Right cardiac atrium (tissue), 5 donors: ENCODE measurements at regions of chr11 and their contacts with region 1.

Region 1: DNA sequence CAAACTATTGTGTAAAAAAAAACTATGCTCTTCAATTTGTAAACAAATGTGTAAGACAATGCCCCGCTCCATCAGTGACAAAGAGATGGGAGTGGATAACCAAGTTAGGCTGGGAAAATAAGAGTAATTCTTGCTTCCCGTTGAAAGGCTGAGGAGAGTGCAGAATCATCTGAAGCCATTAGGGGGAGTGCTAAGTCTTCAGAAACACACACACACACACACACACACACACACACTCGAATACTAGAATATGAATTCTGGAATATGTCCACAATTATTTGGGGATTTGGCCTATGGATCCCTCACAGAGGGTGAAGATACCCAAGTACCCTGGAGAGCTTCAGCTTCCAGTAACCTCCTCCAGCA is 27.8 kb upstream of the ROBO3 start:
- DNase-seq: no peak
- ATAC-seq: peak; percentile 67 to 74
- H3K4me3 ChIP-seq: no peak overlapping the region
- H3K27ac ChIP-seq: no peak overlapping the region
- H3K4me1 ChIP-seq: peaks cover 7% of the 10 kb centered on the region
- H3K27me3 ChIP-seq: no peaks in the 10 kb centered on the region

Region 2: GRCh38 chr11:124402326-124402922 is 435.1 kb before region 1 on chr11:
- intact Hi-C with region 1: loop called in 1 of 4 experiments (anchors 10 kb)
- DNase-seq: peak; percentile 47 to 74 (median 49)
- ATAC-seq: peak; percentile 67 to 78
- H3K4me3 ChIP-seq: no peak overlapping the region
- H3K27ac ChIP-seq: no peak overlapping the region
- H3K4me1 ChIP-seq: no peaks in the 10 kb centered on the region
- H3K27me3 ChIP-seq: no peaks in the 10 kb centered on the region

Region 3: GRCh38 chr11:124673333-124674167 is 163.9 kb before region 1 on chr11 and contains the starts of genes SIAE and SPA17:
- intact Hi-C with region 1: loop called (anchors 2 to 10 kb)
- DNase-seq: peak; percentile 95 to 98 (median 98)
- ATAC-seq: peak; percentile 98 to 99
- H3K4me3 ChIP-seq: peak within 1 kb of the TSS; percentile 64
- H3K27ac ChIP-seq: peak within 1 kb of the TSS; percentile 92
- H3K4me1 ChIP-seq: peaks cover 4% of the 10 kb centered on the region
- H3K27me3 ChIP-seq: no peaks in the 10 kb centered on the region
- total RNA-seq, gene SIAE: 43.4 to 72.6 (median 53.9) TPM
- total RNA-seq, gene SPA17: 2.3 to 4.0 (median 3.0) TPM

Region 4: GRCh38 chr11:124763156-124763947 is 74.1 kb before region 1 on chr11:
- intact Hi-C with region 1: loop called in 3 of 4 experiments (anchors 10 kb)
- DNase-seq: peak; percentile 87 to 96 (median 94)
- ATAC-seq: peak; percentile 3 to 4
- H3K4me3 ChIP-seq: peak overlapping the region; percentile 60
- H3K27ac ChIP-seq: peak overlapping the region; percentile 77
- H3K4me1 ChIP-seq: peaks cover 3% of the 10 kb centered on the region
- H3K27me3 ChIP-seq: no peaks in the 10 kb centered on the region

Region 5: GRCh38 chr11:125025968-125026367 is 188.5 kb after region 1 on chr11:
- intact Hi-C with region 1: no loop called
- DNase-seq: no peak
- ATAC-seq: no peak
- H3K4me3 ChIP-seq: no peak overlapping the region
- H3K27ac ChIP-seq: no peak overlapping the region
- H3K4me1 ChIP-seq: no peaks in the 10 kb centered on the region
- H3K27me3 ChIP-seq: no peaks in the 10 kb centered on the region